ENCODE measurements at regions of chr1 and their contacts with region 1.

Region 1: GRCh38 chr1:65756616-65757015 is 36.1 kb upstream of the PDE4B start:
- DNase-seq: no peak
- H3K4me3 ChIP-seq: no peak overlapping the region
- H3K27ac ChIP-seq: no peak overlapping the region
- H3K27me3 ChIP-seq: no peaks in the 10 kb centered on the region
- CTCF ChIP-seq: no peak

Region 2: GRCh38 chr1:63843884-63844283 is 1912.7 kb before region 1 on chr1:
- CTCF ChIA-PET with region 1: interaction called, 14 read pairs
- POLR2A ChIA-PET with region 1: no interaction called
- DNase-seq: no peak
- H3K4me3 ChIP-seq: no peak overlapping the region
- H3K27ac ChIP-seq: no peak overlapping the region
- H3K27me3 ChIP-seq: peaks cover 2% of the 10 kb centered on the region
- CTCF ChIP-seq: no peak